Heart right ventricle (tissue), 16 donors: ENCODE measurements at regions of chr2 and their contacts with region 1.

Region 1: DNA sequence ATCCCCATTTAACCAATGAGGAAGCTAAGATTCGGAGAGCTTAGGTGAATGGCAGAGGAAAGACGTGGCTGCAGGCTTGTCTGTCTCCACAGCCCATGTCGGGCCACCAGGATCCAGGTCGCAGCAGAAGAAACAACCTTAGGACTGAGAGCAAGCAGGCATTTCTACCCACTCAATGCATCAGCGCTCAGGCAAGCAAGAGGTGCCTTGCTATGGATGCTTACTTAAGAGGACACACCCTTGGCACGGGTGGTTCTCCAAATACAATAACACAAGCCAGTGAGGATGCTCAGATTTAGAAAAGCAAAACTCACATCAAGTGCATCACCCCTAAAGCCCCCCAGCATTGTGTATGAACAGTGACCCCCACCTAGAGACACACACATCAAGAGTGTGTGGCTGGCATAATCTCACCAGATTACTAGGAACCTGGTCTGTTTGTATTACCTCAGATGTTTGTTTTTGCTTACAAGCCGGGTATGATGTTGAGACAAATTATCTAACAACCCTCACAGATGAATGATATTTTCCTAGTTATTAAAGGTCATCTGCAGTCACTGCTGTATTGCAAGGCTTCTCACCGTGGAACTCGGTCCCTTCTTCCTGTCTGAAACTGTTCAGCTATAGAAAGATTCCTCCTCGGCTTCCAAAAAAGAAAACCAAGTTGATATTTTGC is 34.2 kb upstream of the NPAS2 start:
- DNase-seq: no peak
- ATAC-seq: peak in 3 of 8 donors; percentile 5 to 25 (median 10)
- H3K4me3 ChIP-seq: peak overlapping the region in 1 of 10 donors; percentile 3
- H3K27ac ChIP-seq: peak overlapping the region in 7 of 10 donors; percentile 3 to 75 (median 60)
- H3K4me1 ChIP-seq: peaks cover 0 to 29% (median 11%) of the 10 kb centered on the region in 9 donors
- H3K27me3 ChIP-seq: no peaks in the 10 kb centered on the region
- CTCF ChIP-seq: no peak

Region 2: DNA sequence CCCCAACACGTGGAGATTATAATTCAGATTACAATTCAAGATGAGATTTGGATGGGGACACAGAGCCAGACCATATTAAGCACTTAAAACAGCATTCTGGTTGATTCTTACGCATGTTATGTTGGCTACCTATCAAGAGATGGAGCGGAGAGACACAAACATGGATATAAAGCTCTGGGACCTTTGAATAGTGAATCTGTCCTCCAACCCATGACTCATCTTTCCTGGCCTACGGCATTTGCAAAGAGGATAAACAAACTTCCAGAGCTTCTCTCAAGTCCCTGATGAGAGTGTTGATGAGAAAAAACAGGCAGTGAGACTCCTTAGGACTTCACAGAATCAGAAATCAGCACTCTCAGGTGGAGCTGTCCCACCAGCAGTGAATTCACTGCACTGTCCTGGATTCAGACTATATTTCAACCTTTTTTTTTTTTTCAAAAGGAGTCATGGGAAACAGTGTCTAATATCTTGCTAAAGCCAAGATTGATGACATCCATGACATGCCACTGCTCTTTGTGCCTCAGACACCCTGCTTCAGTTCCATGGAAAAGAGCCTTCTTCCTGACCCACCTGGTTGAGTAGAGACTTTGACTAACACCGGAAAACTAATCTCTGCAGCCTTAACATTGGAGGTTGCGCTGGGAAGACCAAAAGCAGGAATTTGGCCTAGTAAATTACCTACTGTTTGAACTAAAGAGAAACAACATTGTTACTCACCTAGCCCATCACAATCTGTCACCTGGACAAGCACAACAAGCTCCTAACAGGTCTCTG is 28.0 kb before region 1 on chr2:
- intact Hi-C with region 1: no loop called
- DNase-seq: no peak
- ATAC-seq: peak in 2 of 8 donors; percentile 41 to 46
- H3K4me3 ChIP-seq: no peak overlapping the region
- H3K27ac ChIP-seq: peak overlapping the region in 1 of 10 donors; percentile 5
- H3K4me1 ChIP-seq: peaks cover 0 to 24% (median 10%) of the 10 kb centered on the region in 9 donors
- H3K27me3 ChIP-seq: no peaks in the 10 kb centered on the region
- CTCF ChIP-seq: no peak

Region 3: GRCh38 chr2:100807707-100808106 is 21.9 kb after region 1 on chr2:
- intact Hi-C with region 1: loop called in 1 of 10 experiments (anchors 2 kb)
- DNase-seq: no peak
- ATAC-seq: peak in 4 of 8 donors; percentile 48 to 70 (median 55)
- H3K4me3 ChIP-seq: no peak overlapping the region
- H3K27ac ChIP-seq: peak overlapping the region in 1 of 10 donors; percentile 23
- H3K4me1 ChIP-seq: peaks cover 0 to 22% (median 6%) of the 10 kb centered on the region in 9 donors
- H3K27me3 ChIP-seq: no peaks in the 10 kb centered on the region
- CTCF ChIP-seq: no peak